ENCODE measurements at regions of chr3 and their contacts with region 1.

Region 1: GRCh38 chr3:140736863-140737460 is 59.1 kb downstream of the TRIM42 start:
- DNase-seq: peak; percentile 25 to 73 (median 48)
- ATAC-seq: peak in 3 of 4 donors; percentile 49 to 73 (median 69)
- H3K4me3 ChIP-seq: no peak overlapping the region
- H3K27ac ChIP-seq: no peak overlapping the region
- H3K4me1 ChIP-seq: no peaks in the 10 kb centered on the region
- H3K27me3 ChIP-seq: peaks cover 0 to 10% (median 0%) of the 10 kb centered on the region in 9 donors
- CTCF ChIP-seq: peak; percentile 46 to 66 (median 55)
- POLR2A ChIP-seq: no peak

Region 2: DNA sequence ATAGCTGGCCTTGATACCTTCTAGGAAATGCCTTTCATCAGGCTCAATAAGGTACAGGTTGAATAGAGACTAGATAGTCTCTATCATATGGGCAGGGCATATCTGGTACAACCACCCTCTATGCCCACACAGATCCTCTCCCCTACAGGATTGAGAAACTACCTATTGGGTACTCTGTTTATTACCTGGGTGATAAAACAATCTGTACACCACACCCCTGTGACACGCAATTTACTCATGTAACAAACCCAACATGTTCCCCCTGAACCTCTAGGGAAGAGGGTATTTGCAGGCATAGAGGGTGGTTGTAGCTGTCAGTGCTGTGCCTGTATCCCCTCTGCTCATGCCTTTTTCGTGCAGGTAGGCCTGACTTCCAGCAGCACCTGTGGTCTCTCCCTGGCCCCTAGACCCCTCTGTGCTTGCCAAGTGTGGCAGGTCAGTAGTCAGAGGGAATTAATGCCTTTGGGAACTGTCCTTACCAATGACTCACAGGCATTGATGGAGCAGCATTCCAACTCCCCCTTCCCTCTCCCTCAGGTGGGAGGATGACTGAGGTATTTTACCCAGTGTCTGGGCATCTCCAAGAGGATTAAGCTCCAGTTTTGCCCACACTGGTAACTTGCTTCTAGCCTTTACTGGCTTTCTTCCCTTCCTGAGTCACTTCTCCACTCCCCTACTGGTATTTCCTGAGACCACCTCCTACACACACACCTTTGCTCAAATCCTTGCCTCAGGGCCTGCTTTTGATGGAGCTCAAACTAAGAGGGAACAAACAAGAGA is 783.6 kb before region 1 on chr3:
- intact Hi-C with region 1: loop called in 1 of 10 experiments (anchors 10 kb)
- DNase-seq: no peak
- ATAC-seq: no peak
- H3K4me3 ChIP-seq: no peak overlapping the region
- H3K27ac ChIP-seq: no peak overlapping the region
- H3K4me1 ChIP-seq: peaks cover 0 to 5% (median 0%) of the 10 kb centered on the region in 12 donors
- H3K27me3 ChIP-seq: no peaks in the 10 kb centered on the region
- CTCF ChIP-seq: no peak
- POLR2A ChIP-seq: no peak

Region 3: DNA sequence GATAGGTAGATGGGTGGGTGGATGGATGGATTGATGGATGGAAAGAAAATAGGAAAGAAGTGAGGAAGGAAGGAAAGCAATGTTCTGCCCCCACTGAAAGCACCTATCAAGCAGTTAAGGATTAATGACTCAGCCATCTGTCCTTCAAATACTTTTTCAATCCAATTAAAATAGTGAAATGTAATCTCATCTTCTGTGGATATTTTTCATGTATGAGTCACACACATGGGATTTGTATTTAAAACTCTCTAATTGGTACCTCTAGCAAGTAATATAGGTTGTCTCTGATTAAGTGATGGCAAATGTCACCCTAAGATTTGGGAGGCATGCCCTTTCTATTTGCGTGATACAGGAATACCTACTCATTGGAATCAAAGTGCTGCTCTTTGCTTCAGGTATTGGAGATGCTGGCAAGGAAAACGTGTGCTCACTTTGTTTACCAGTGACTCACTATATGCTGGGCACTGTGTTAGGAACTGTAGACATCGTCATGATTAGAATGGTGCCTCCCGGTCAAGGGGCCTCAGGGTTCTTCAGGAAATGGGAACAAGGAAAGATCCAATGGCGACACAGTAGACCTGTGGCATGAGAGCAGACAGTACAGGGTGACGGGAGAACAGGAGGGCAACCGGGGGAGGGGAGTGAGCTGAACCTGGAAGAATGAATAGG is 571.9 kb before region 1 on chr3:
- intact Hi-C with region 1: no loop called
- DNase-seq: no peak
- ATAC-seq: no peak
- H3K4me3 ChIP-seq: no peak overlapping the region
- H3K27ac ChIP-seq: no peak overlapping the region
- H3K4me1 ChIP-seq: peaks cover 0 to 4% (median 0%) of the 10 kb centered on the region in 12 donors
- H3K27me3 ChIP-seq: no peaks in the 10 kb centered on the region
- CTCF ChIP-seq: no peak
- POLR2A ChIP-seq: no peak

Region 4: DNA sequence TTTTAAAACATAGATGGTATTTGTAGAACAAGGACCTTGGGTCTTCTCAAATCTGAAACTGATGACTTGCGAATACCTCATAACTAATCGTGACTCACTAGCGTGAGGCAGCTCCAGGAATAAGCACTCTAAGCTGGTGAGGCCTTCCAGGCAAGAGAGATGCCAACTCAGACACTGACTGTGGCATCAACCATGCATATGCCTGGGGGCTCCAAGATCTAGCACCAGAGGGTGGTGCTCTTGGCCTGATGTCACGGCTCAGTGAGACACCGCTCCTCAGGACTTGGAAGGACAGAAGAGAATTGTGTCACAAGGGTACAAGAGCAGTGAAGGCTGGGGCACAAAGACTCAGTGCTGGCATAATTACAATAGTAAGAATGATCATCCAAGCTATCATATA is 184.1 kb before region 1 on chr3:
- intact Hi-C with region 1: loop called in 8 of 10 experiments (anchors 2 to 10 kb)
- DNase-seq: peak in 1 of 5 donors; percentile 36
- ATAC-seq: peak; percentile 55 to 72 (median 67)
- H3K4me3 ChIP-seq: no peak overlapping the region
- H3K27ac ChIP-seq: no peak overlapping the region
- H3K4me1 ChIP-seq: no peaks in the 10 kb centered on the region
- H3K27me3 ChIP-seq: no peaks in the 10 kb centered on the region
- CTCF ChIP-seq: peak in 8 of 12 donors; percentile 9 to 33 (median 22)
- POLR2A ChIP-seq: no peak

Region 5: DNA sequence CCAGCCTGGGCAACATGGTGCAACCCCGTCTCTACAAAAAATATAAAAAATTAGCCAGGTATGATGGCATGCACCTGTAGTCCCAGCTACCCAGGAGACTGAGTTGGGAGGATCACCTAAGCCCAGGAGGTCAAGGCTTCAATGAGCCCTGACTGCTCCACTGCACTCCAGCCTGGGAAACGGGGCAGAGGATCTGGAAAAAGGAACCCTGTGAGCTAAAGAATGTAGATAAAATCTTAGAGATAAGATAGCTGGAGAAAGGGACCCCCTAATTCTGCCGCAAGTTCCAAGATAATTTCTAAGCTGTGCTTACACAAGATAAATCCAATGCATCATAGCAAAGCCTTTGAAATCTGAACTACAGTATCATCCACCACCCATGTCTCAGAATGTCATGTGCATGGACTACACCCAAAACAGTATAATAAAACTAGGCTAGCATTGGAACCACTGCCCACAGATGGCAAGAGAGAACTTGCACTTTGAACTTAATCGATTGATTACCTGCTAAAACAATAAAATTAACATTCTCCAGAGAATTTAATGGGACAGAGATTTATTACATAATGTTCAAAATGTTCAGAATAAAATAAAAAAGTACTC is 40.8 kb after region 1 on chr3:
- intact Hi-C with region 1: no loop called
- DNase-seq: no peak
- ATAC-seq: no peak
- H3K4me3 ChIP-seq: no peak overlapping the region
- H3K27ac ChIP-seq: no peak overlapping the region
- H3K4me1 ChIP-seq: no peaks in the 10 kb centered on the region
- H3K27me3 ChIP-seq: no peaks in the 10 kb centered on the region
- CTCF ChIP-seq: no peak
- POLR2A ChIP-seq: no peak